ENCODE measurements at regions of chr11 and their contacts with region 1.

Region 1: GRCh38 chr11:110429731-110430266 is at the start of gene FDX1:
- DNase-seq: peak; percentile 80
- H3K4me3 Mint-ChIP-seq: peak within 1 kb of the TSS; percentile 96
- H3K27ac Mint-ChIP-seq: peak within 1 kb of the TSS; percentile 86
- H3K4me1 Mint-ChIP-seq: peaks cover 40% of the 10 kb centered on the region
- H3K27me3 Mint-ChIP-seq: no peaks in the 10 kb centered on the region
- total RNA-seq, gene FDX1: 10.9 to 11.6 TPM

Region 2: GRCh38 chr11:110195845-110196754 is 233.7 kb before region 1 on chr11:
- CTCF ChIA-PET with region 1: interaction called, 107 read pairs
- POLR2A ChIA-PET with region 1: interaction called, 3 read pairs
- DNase-seq: no peak
- H3K4me3 Mint-ChIP-seq: no peak overlapping the region
- H3K27ac Mint-ChIP-seq: no peak overlapping the region
- H3K4me1 Mint-ChIP-seq: peaks cover 18% of the 10 kb centered on the region
- H3K27me3 Mint-ChIP-seq: peaks cover 19% of the 10 kb centered on the region

Region 3: DNA sequence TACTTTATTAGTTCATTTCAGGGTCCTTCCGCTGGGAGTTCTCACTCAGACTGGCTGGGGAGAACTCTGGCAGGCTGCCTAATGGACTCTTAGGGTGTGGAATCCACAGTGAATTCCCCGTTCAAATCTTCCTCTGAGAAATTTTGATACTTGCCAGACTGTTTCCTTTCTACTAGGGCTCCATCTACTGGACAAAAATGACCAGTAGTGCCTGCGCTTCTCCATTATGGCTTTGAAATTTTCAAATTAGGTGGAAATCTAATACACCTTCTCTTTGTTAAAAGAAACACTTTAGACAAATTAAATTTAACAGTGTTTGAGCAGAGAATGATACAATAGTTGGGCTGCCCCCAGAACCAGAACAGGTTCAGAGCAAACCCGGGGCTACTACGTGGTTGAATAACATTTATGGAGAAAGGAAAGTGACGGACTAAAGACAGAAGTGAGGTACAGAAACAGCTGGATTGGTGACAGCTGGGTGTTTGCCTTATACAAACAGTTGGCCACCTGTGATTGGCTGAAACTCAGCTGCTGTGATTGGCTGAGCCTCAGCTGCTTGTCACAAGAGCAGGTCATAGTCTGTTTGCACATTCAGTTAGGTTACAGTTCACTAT is 53.0 kb before region 1 on chr11:
- CTCF ChIA-PET with region 1: interaction called, 19 read pairs
- POLR2A ChIA-PET with region 1: interaction called, 3 read pairs
- DNase-seq: no peak
- H3K4me3 Mint-ChIP-seq: no peak overlapping the region
- H3K27ac Mint-ChIP-seq: no peak overlapping the region
- H3K4me1 Mint-ChIP-seq: peaks cover 19% of the 10 kb centered on the region
- H3K27me3 Mint-ChIP-seq: no peaks in the 10 kb centered on the region

Region 4: GRCh38 chr11:110447897-110448745 is 18.3 kb after region 1 on chr11:
- CTCF ChIA-PET with region 1: interaction called, 29 read pairs
- POLR2A ChIA-PET with region 1: interaction called, 5 read pairs
- DNase-seq: no peak
- H3K4me3 Mint-ChIP-seq: no peak overlapping the region
- H3K27ac Mint-ChIP-seq: no peak overlapping the region
- H3K4me1 Mint-ChIP-seq: peaks cover 24% of the 10 kb centered on the region
- H3K27me3 Mint-ChIP-seq: no peaks in the 10 kb centered on the region

Region 5: DNA sequence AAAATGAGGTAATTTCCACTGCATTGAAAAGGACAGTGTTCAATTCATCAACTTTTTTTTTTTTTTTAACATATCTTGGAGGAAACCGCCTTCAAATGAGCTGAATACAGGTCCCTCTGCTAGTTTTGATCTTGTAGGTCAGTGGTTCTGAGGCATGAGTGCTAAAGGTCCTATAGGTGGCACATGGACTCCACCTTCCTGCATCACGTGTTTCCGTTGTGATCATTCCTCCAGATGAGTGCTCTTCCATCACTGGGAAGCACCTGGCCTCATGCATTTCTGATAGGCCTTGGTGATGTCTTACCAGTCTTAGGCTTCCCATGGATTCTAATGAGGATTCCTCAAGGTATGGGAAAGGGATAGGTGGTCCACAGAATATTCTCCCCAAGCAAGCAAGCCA is 37.8 kb after region 1 on chr11:
- CTCF ChIA-PET with region 1: no interaction called
- POLR2A ChIA-PET with region 1: no interaction called
- DNase-seq: no peak
- H3K4me3 Mint-ChIP-seq: no peak overlapping the region
- H3K27ac Mint-ChIP-seq: no peak overlapping the region
- H3K4me1 Mint-ChIP-seq: peaks cover 15% of the 10 kb centered on the region
- H3K27me3 Mint-ChIP-seq: no peaks in the 10 kb centered on the region

Region 6: GRCh38 chr11:111230122-111230465 is 800.3 kb after region 1 on chr11:
- CTCF ChIA-PET with region 1: interaction called, 25 read pairs
- POLR2A ChIA-PET with region 1: no interaction called
- DNase-seq: no peak
- H3K4me3 Mint-ChIP-seq: peak overlapping the region; percentile 75
- H3K27ac Mint-ChIP-seq: no peak overlapping the region
- H3K4me1 Mint-ChIP-seq: peaks cover 30% of the 10 kb centered on the region
- H3K27me3 Mint-ChIP-seq: peaks cover 31% of the 10 kb centered on the region